ENCODE measurements at regions of chr14 and their contacts with region 1.

Region 1: DNA sequence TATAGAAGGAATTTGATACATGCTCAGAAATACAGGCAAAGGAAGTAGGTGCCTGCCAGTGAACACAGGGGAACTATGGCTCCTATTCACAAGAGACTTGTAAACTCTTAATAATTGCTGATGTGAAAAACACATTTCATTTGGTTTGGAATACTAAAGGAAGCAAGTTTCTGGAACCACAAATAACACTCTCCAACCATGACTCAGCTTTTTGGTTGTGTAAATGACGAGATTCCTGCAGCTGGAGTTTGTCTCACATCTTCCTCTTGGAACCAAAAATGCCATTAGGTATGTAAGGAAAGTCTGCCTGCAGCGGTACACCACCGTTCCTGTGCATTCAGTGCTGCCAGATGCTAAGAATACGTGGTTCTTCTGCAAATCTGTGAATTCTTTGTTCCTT is 4.5 kb upstream of the OR11H6 start:
- DNase-seq: no peak
- H3K4me3 ChIP-seq: no peak overlapping the region
- H3K27ac ChIP-seq: no peak overlapping the region
- H3K4me1 ChIP-seq: no peaks in the 10 kb centered on the region
- H3K27me3 ChIP-seq: no peaks in the 10 kb centered on the region
- CTCF ChIP-seq: no peak

Region 2: GRCh38 chr14:20262642-20263128 is 43.7 kb after region 1 on chr14:
- CTCF ChIA-PET with region 1: no interaction called
- dilution Hi-C with region 1: no loop called
- in situ Hi-C with region 1: no loop called
- intact Hi-C with region 1: loop called (anchors 5 kb)
- DNase-seq: peak; percentile 89
- H3K4me3 ChIP-seq: no peak overlapping the region
- H3K27ac ChIP-seq: peak overlapping the region; percentile 30
- H3K4me1 ChIP-seq: peaks cover 12% of the 10 kb centered on the region
- H3K27me3 ChIP-seq: no peaks in the 10 kb centered on the region
- CTCF ChIP-seq: no peak

Region 3: GRCh38 chr14:20295067-20295466 is 76.0 kb after region 1 on chr14:
- CTCF ChIA-PET with region 1: no interaction called
- dilution Hi-C with region 1: no loop called
- in situ Hi-C with region 1: no loop called
- intact Hi-C with region 1: no loop called
- DNase-seq: no peak
- H3K4me3 ChIP-seq: no peak overlapping the region
- H3K27ac ChIP-seq: no peak overlapping the region
- H3K4me1 ChIP-seq: no peaks in the 10 kb centered on the region
- H3K27me3 ChIP-seq: no peaks in the 10 kb centered on the region
- CTCF ChIP-seq: no peak